ENCODE measurements at regions of chr17 and their contacts with region 1.

Region 1: GRCh38 chr17:75012346-75013091 is at the start of gene MRPL58:
- DNase-seq: peak; percentile 91
- ATAC-seq: peak; percentile 96
- H3K4me3 Mint-ChIP-seq: peak within 1 kb of the TSS; percentile 95
- H3K27ac Mint-ChIP-seq: peak within 1 kb of the TSS; percentile 92
- H3K4me1 Mint-ChIP-seq: peaks cover 31% of the 10 kb centered on the region
- H3K27me3 Mint-ChIP-seq: no peaks in the 10 kb centered on the region
- total RNA-seq, gene MRPL58: 64.6 to 66.5 TPM

Region 2: DNA sequence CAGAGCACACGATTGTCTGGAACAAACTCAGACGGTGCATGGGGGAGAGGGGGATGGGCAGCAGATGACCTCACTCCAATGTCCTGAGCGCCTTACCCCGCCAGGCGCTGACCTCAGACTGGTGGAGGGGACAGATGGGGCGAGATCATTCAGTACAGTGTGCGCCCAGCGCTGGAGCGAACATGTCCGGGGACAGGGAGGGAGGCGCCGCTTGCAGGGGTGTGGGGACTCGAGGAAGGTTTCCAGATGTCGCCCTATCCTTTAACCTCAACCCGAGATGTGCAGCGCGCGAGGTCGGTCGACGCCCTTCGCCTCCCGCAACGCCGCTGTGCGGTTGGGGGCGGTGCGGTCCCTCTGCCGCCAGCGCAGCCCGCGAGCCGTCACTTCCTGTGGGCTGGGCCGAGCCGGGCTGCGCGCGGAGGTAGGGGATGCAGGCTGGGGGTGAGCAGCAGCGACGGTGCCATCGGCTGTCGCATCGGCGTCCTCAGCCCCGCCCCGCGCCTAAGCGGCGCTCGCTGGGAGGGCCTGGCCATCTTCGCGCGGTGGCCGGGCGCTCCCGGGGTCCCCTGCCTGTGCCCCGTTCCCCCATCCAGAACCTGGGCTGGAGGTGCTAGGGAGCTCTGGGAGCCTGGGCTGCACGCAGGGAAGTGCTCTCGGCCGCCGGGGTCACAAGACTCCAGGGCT is 30.4 kb before region 1 on chr17:
- CTCF ChIA-PET with region 1: interaction called, 31 read pairs
- POLR2A ChIA-PET with region 1: interaction called, 5 read pairs
- intact Hi-C with region 1: loop called in 1 of 2 experiments (anchors 1 kb)
- DNase-seq: peak; percentile 90
- ATAC-seq: peak; percentile 95
- H3K4me3 Mint-ChIP-seq: peak overlapping the region; percentile 77
- H3K27ac Mint-ChIP-seq: peak overlapping the region; percentile 79
- H3K4me1 Mint-ChIP-seq: peaks cover 18% of the 10 kb centered on the region
- H3K27me3 Mint-ChIP-seq: peaks cover 5% of the 10 kb centered on the region

Region 3: DNA sequence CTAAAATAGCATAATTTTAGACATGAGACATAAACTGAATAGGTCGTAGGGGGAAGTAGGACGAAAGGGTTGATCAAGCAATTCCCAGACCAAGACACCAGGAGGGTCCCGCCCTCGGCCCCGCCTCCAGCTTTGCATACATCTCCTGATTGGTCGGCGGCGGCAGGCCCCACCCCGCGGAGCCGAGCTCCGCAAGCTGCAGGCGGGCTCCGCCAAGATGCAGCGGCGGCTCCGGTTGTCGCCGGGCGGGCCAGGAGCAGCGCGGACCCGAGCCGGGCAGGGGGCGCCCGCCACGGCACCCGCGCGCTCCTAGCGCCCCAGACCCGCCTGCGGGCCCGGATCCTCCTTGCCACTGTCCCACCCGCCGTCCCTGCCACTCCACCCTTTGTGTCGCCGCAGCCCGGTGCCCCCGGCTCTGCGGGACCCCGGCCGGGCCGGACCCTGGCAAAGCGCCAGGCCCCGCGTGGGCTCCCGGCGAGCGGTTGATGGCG is 25.1 kb before region 1 on chr17 and contains the start of gene CDR2L:
- CTCF ChIA-PET with region 1: interaction called, 31 read pairs
- POLR2A ChIA-PET with region 1: interaction called, 6 read pairs
- intact Hi-C with region 1: loop called in 1 of 2 experiments (anchors 1 kb)
- DNase-seq: peak; percentile 95
- ATAC-seq: peak; percentile 98
- H3K4me3 Mint-ChIP-seq: peak within 1 kb of the TSS; percentile 73
- H3K27ac Mint-ChIP-seq: no peak within 1 kb of the TSS
- H3K4me1 Mint-ChIP-seq: peaks cover 9% of the 10 kb centered on the region
- H3K27me3 Mint-ChIP-seq: peaks cover 10% of the 10 kb centered on the region
- total RNA-seq, gene CDR2L: 0.89 to 0.91 TPM

Region 4: DNA sequence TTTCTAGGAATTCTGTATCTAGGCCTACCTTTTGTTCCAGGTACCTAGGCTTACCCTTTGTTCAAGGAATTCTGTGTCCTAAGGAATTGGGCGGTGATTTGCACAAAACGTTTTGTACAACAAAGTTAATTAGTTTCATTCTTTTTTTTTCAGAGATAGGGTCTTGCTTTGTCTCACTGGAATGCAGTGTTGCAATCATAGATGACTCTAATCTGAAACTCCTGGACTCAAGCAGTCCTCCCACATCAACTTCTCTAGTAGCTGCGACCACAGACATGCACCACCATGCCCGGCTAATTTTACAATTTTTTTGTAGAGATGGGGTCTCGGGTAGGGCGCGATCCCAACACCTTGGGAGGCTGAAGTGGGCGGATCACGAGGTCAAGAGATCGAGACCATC is 18.0 kb before region 1 on chr17:
- CTCF ChIA-PET with region 1: interaction called, 10 read pairs
- POLR2A ChIA-PET with region 1: interaction called, 5 read pairs
- intact Hi-C with region 1: no loop called
- DNase-seq: no peak
- ATAC-seq: no peak
- H3K4me3 Mint-ChIP-seq: no peak overlapping the region
- H3K27ac Mint-ChIP-seq: no peak overlapping the region
- H3K4me1 Mint-ChIP-seq: peaks cover 3% of the 10 kb centered on the region
- H3K27me3 Mint-ChIP-seq: no peaks in the 10 kb centered on the region

Region 5: GRCh38 chr17:75024686-75025397 is 12.3 kb after region 1 on chr17:
- CTCF ChIA-PET with region 1: interaction called, 24 read pairs
- POLR2A ChIA-PET with region 1: no interaction called
- intact Hi-C with region 1: no loop called
- DNase-seq: peak; percentile 64
- ATAC-seq: peak; percentile 76
- H3K4me3 Mint-ChIP-seq: peak overlapping the region; percentile 17
- H3K27ac Mint-ChIP-seq: peak overlapping the region; percentile 56
- H3K4me1 Mint-ChIP-seq: peaks cover 12% of the 10 kb centered on the region
- H3K27me3 Mint-ChIP-seq: no peaks in the 10 kb centered on the region

Region 6: GRCh38 chr17:75034236-75034908 is 21.9 kb after region 1 on chr17:
- CTCF ChIA-PET with region 1: interaction called, 3 read pairs
- POLR2A ChIA-PET with region 1: interaction called, 4 read pairs
- intact Hi-C with region 1: loop called (anchors 1 kb)
- DNase-seq: peak; percentile 96
- ATAC-seq: peak; percentile 65
- H3K4me3 Mint-ChIP-seq: peak overlapping the region; percentile 91
- H3K27ac Mint-ChIP-seq: peak overlapping the region; percentile 96
- H3K4me1 Mint-ChIP-seq: peaks cover 49% of the 10 kb centered on the region
- H3K27me3 Mint-ChIP-seq: no peaks in the 10 kb centered on the region

Region 7: GRCh38 chr17:75046582-75047289 is 34.2 kb after region 1 on chr17 and contains the starts of genes ATP5PD and KCTD2:
- CTCF ChIA-PET with region 1: interaction called, 8 read pairs
- POLR2A ChIA-PET with region 1: interaction called, 3 read pairs
- intact Hi-C with region 1: loop called in 1 of 2 experiments (anchors 1 kb)
- DNase-seq: peak; percentile 97
- ATAC-seq: peak; percentile 95
- H3K4me3 Mint-ChIP-seq: peak within 1 kb of the TSS; percentile 99
- H3K27ac Mint-ChIP-seq: peak within 1 kb of the TSS; percentile 94
- H3K4me1 Mint-ChIP-seq: peaks cover 37% of the 10 kb centered on the region
- H3K27me3 Mint-ChIP-seq: no peaks in the 10 kb centered on the region
- total RNA-seq, gene ATP5PD: 194 to 237 TPM
- total RNA-seq, gene KCTD2: 15.3 to 16.7 TPM